Endothelial cell of umbilical vein (primary cell): ENCODE measurements at regions of chr21 and their contacts with region 1.

Region 1: DNA sequence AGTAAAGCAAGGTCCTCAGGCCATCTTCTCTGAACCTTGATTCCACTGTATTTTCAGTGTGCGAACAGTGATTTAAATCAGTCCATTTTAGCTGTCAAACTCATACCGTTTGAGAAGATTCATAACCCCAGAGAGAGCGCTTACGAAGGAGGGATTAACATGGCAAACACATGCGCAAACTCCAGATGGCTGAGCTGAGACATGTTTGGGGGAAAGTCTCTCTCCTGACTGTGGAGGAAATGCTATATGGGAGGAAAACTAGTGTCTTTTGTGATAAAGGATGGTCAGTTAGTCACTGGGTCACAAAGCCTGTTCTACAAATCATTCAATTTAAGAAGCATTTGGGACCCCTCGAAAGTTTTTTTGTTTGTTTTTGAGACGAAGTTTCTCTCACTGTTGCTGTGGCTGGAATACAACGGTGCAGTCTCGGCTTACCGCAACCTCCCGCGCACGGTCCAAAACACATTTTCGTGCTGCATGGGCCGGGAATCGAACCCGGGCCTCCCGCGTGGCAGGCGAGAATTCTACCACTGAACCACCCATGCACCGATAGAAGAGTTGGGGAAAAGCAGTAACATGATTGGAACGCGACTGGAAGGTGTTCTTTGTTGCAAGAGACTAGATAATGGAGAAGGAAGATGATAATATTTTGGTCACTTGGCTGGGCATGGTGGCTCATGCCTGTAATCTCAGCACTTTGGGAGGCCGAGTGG is 58.4 kb upstream of the CXADR start:
- DNase-seq: peak; percentile 73
- H3K4me3 ChIP-seq: no peak overlapping the region
- H3K27ac ChIP-seq: peak overlapping the region; percentile 43
- H3K4me1 ChIP-seq: peaks cover 15% of the 10 kb centered on the region
- H3K27me3 ChIP-seq: no peaks in the 10 kb centered on the region
- CTCF ChIP-seq: no peak
- POLR2A ChIP-seq: no peak

Region 2: GRCh38 chr21:17343055-17343454 is 111.4 kb before region 1 on chr21:
- CTCF ChIA-PET with region 1: no interaction called
- POLR2A ChIA-PET with region 1: no interaction called
- dilution Hi-C with region 1: no loop called
- intact Hi-C with region 1: no loop called
- DNase-seq: peak; percentile 10
- H3K4me3 ChIP-seq: no peak overlapping the region
- H3K27ac ChIP-seq: no peak overlapping the region
- H3K4me1 ChIP-seq: no peaks in the 10 kb centered on the region
- H3K27me3 ChIP-seq: no peaks in the 10 kb centered on the region
- CTCF ChIP-seq: no peak
- POLR2A ChIP-seq: no peak

Region 3: GRCh38 chr21:17491716-17492414 is 37.4 kb after region 1 on chr21:
- CTCF ChIA-PET with region 1: no interaction called
- POLR2A ChIA-PET with region 1: no interaction called
- dilution Hi-C with region 1: no loop called
- intact Hi-C with region 1: loop called (anchors 2 kb)
- DNase-seq: peak; percentile 89
- H3K4me3 ChIP-seq: no peak overlapping the region
- H3K27ac ChIP-seq: peak overlapping the region; percentile 72
- H3K4me1 ChIP-seq: peaks cover 45% of the 10 kb centered on the region
- H3K27me3 ChIP-seq: no peaks in the 10 kb centered on the region
- CTCF ChIP-seq: no peak
- POLR2A ChIP-seq: no peak

Region 4: DNA sequence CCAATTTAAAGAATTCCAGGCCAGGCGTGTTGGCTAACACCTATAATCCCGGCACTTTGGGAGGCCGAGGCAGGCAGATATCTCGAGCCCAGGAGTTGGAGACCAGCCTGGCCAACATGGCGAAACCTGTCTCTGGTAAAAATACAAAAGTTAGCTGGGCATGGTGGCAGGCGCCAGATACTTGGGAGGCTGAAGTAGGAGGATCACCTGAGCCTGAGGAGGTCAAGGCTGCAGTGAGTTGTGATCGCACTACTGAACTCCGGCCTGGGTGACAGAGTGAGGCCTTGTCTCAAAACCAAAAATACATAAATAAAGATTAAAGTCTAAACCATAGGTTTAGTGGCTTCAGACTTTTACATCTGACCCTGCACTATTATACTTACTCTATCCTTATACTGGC is 125.8 kb after region 1 on chr21:
- CTCF ChIA-PET with region 1: interaction called, 7 read pairs
- POLR2A ChIA-PET with region 1: no interaction called
- dilution Hi-C with region 1: no loop called
- intact Hi-C with region 1: loop called (anchors 5 kb)
- DNase-seq: no peak
- H3K4me3 ChIP-seq: no peak overlapping the region
- H3K27ac ChIP-seq: no peak overlapping the region
- H3K4me1 ChIP-seq: no peaks in the 10 kb centered on the region
- H3K27me3 ChIP-seq: peaks cover 2 to 3% of the 10 kb centered on the region in 2 experiments
- CTCF ChIP-seq: no peak
- POLR2A ChIP-seq: no peak

Region 5: GRCh38 chr21:17631195-17631594 is 176.7 kb after region 1 on chr21:
- CTCF ChIA-PET with region 1: no interaction called
- POLR2A ChIA-PET with region 1: no interaction called
- dilution Hi-C with region 1: no loop called
- intact Hi-C with region 1: no loop called
- DNase-seq: no peak
- H3K4me3 ChIP-seq: no peak overlapping the region
- H3K27ac ChIP-seq: no peak overlapping the region
- H3K4me1 ChIP-seq: no peaks in the 10 kb centered on the region
- H3K27me3 ChIP-seq: no peaks in the 10 kb centered on the region
- CTCF ChIP-seq: no peak
- POLR2A ChIP-seq: no peak